ENCODE measurements at regions of chrX and their contacts with region 1.

Region 1: DNA sequence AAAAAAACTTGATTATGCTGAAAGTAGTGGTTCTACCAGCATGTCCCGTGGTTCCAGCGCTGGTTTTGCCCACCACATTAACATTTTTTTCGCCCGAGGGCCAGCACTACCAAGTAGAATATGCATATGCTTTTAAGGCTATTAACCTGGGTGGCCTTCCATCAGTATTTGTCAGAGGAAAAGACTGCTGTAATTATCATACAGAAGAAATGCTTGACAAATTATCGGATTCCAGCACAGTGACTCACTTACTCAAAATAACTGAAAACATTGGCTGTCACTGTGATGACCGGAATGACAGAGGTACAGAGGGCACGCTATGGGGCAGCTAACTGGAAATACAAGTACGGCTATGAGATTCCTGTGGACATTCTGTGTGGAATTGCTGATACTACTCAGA is 34.6 kb downstream of the PRPS2 start:
- DNase-seq: no peak
- H3K4me3 ChIP-seq: no peak overlapping the region
- H3K27ac ChIP-seq: no peak overlapping the region
- H3K4me1 ChIP-seq: no peaks in the 10 kb centered on the region
- H3K27me3 ChIP-seq: no peaks in the 10 kb centered on the region
- CTCF ChIP-seq: no peak
- POLR2A ChIP-seq: no peak

Region 2: GRCh38 chrX:12894074-12895030 is 68.6 kb after region 1 on chrX:
- intact Hi-C with region 1: loop called in 1 of 2 experiments (anchors 10 kb)
- DNase-seq: peak in 5 of 7 donors; percentile 17 to 61 (median 29)
- H3K4me3 ChIP-seq: no peak overlapping the region
- H3K27ac ChIP-seq: no peak overlapping the region
- H3K4me1 ChIP-seq: no peaks in the 10 kb centered on the region
- H3K27me3 ChIP-seq: peaks cover 17% of the 10 kb centered on the region
- CTCF ChIP-seq: peak in 5 of 6 experiments; percentile 30 to 66 (median 50)
- POLR2A ChIP-seq: no peak

Region 3: GRCh38 chrX:13357925-13358324 is 532.1 kb after region 1 on chrX:
- intact Hi-C with region 1: no loop called
- DNase-seq: no peak
- H3K4me3 ChIP-seq: no peak overlapping the region
- H3K27ac ChIP-seq: no peak overlapping the region
- H3K4me1 ChIP-seq: no peaks in the 10 kb centered on the region
- H3K27me3 ChIP-seq: no peaks in the 10 kb centered on the region
- CTCF ChIP-seq: no peak
- POLR2A ChIP-seq: no peak